ENCODE measurements at regions of chr7 and their contacts with region 1.

Region 1: DNA sequence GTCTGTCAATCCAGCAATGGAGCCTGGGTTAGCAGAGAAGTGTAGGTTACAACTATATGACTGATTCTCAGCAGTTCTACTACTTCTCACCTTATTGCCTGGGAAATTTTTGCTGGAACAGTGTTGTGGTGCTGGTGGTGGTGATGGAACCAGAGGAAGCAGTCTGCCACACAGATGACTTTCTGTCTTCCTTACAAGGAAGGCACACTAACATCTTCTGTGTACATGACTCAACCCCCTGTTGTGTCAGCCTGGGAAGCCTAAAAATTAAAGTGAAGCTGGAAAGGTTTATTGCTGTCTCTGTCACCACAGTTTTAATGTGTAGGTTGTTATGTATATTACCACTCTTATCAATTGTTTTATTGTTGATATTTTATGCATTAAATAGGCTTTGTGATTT is 40.3 kb downstream of the ANKRD7 start:
- DNase-seq: no peak

Region 2: DNA sequence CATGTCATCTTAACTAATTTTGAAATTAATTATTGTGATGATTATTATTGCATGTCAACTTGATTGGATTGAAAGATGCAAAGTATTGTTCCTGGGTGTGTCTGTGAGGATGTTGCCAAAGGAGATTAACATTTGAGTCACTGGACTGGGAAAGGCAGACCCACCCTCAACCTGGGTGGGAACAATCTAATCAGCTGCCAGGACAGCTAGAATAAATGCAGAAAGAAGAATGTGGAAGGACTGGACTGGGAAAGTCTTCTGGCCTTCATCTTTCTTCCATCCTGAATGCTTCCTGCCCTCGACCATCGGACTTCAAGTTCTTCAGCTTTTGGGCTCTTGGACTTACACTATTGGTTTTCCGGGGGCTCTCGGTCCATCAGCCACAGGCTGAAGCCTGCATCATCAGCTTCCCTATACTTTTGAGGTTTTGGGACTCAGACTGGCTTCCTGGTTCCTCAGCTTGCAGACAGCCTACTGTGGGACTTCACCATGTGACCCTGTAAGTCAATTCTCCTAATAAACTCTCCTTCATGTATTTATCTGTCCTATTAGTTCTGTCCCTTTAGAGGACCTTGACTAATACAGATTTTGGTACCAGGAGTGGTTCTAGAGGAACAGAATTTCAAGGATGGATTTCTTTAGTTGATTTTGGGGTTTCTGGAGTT is 919.4 kb after region 1 on chr7:
- intact Hi-C with region 1: loop called (anchors 10 kb)
- DNase-seq: no peak